ENCODE measurements at regions of chr2 and their contacts with region 1.

Region 1: DNA sequence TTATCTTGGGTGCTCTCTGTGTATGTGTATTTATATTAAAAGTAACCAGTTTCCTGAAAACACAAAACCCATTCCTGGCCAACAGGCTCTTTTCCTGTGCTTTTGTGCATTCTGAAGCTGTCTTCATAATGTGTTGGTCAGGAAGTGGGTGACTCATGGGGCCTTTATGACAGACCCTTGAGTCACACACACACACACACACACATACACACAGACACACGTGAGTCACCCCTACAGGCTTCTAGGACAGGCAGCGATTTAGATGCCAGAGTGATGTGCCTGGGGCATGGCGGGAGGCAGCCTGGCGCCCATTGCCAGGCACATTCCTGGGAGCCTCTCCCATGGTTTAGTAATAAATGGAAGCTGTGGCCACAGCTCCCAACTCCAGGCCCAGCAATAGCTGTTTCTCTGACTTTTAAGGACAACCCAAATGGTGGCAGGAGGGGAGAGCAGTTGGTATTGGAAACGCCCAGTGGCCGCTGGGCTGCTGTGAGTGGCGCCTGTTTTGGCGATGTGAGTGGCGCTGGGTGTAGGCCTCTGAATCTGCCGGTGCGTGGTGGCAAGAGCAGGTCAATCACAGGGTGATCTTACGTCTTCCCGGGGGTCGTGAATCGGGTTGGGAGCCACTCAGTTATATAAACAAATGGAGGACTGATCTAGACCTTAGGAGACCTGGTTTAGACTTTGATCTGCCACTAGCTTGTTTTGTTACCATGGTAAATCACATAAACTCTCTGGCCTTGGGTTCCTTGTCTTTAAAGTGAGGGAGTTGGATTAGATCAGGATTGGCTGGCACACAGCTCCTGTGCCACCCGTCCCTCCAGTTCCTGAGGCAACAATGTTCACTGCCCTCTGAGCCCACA is 150.7 kb upstream of the DLX2 start:
- DNase-seq: peak; percentile 100
- H3K4me3 Mint-ChIP-seq: peak overlapping the region; percentile 56
- H3K27ac Mint-ChIP-seq: peak overlapping the region; percentile 100
- H3K4me1 Mint-ChIP-seq: peaks cover 55% of the 10 kb centered on the region
- H3K27me3 Mint-ChIP-seq: no peaks in the 10 kb centered on the region
- CTCF ChIP-seq: no peak

Region 2: DNA sequence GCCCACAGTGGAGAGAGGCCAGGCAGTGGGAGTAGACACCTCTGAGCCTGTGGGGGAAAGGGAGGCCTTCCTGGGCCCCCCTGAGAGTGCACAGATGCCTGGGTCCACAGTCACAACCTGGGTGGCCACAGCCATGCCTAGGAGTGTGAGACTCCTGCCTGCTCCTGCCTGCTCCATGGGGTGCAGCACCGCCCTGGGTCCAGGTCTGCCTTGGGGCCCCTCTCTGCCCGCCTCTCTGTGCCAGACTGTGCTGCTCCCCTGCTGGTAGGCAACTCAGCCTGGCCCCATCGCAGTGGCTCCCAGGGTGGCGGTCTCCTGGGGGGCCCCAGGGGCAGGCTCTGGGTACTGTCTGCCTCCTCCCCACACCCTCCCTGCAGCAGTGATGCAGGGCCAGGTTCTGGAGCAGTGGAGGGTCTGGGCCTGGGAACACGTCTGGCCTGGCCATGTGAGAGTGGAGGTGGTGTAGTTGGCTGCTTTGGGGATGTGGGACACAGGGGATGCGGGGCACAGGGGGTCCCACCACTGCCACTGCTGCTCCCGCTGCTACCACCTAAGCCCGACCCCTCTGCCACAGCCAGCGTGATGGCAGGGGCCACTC is 90.6 kb before region 1 on chr2:
- CTCF ChIA-PET with region 1: no interaction called
- POLR2A ChIA-PET with region 1: no interaction called
- intact Hi-C with region 1: no loop called
- DNase-seq: no peak
- H3K4me3 Mint-ChIP-seq: no peak overlapping the region
- H3K27ac Mint-ChIP-seq: no peak overlapping the region
- H3K4me1 Mint-ChIP-seq: no peaks in the 10 kb centered on the region
- H3K27me3 Mint-ChIP-seq: peaks cover 2% of the 10 kb centered on the region
- CTCF ChIP-seq: no peak

Region 3: GRCh38 chr2:172179045-172179701 is 74.2 kb before region 1 on chr2:
- CTCF ChIA-PET with region 1: interaction called, 4 read pairs
- POLR2A ChIA-PET with region 1: interaction called, 14 read pairs
- intact Hi-C with region 1: no loop called
- DNase-seq: peak; percentile 89
- H3K4me3 Mint-ChIP-seq: no peak overlapping the region
- H3K27ac Mint-ChIP-seq: peak overlapping the region; percentile 9
- H3K4me1 Mint-ChIP-seq: peaks cover 28% of the 10 kb centered on the region
- H3K27me3 Mint-ChIP-seq: no peaks in the 10 kb centered on the region
- CTCF ChIP-seq: no peak

Region 4: GRCh38 chr2:172208791-172209325 is 44.6 kb before region 1 on chr2:
- CTCF ChIA-PET with region 1: interaction called, 3 read pairs
- POLR2A ChIA-PET with region 1: interaction called, 19 read pairs
- intact Hi-C with region 1: no loop called
- DNase-seq: peak; percentile 56
- H3K4me3 Mint-ChIP-seq: peak overlapping the region; percentile 41
- H3K27ac Mint-ChIP-seq: peak overlapping the region; percentile 91
- H3K4me1 Mint-ChIP-seq: peaks cover 26% of the 10 kb centered on the region
- H3K27me3 Mint-ChIP-seq: no peaks in the 10 kb centered on the region
- CTCF ChIP-seq: no peak

Region 5: GRCh38 chr2:172226244-172227061 is 27.0 kb before region 1 on chr2:
- CTCF ChIA-PET with region 1: interaction called, 33 read pairs
- POLR2A ChIA-PET with region 1: interaction called, 245 read pairs
- intact Hi-C with region 1: no loop called
- DNase-seq: no peak
- H3K4me3 Mint-ChIP-seq: no peak overlapping the region
- H3K27ac Mint-ChIP-seq: no peak overlapping the region
- H3K4me1 Mint-ChIP-seq: peaks cover 55% of the 10 kb centered on the region
- H3K27me3 Mint-ChIP-seq: no peaks in the 10 kb centered on the region
- CTCF ChIP-seq: peak; percentile 23

Region 6: DNA sequence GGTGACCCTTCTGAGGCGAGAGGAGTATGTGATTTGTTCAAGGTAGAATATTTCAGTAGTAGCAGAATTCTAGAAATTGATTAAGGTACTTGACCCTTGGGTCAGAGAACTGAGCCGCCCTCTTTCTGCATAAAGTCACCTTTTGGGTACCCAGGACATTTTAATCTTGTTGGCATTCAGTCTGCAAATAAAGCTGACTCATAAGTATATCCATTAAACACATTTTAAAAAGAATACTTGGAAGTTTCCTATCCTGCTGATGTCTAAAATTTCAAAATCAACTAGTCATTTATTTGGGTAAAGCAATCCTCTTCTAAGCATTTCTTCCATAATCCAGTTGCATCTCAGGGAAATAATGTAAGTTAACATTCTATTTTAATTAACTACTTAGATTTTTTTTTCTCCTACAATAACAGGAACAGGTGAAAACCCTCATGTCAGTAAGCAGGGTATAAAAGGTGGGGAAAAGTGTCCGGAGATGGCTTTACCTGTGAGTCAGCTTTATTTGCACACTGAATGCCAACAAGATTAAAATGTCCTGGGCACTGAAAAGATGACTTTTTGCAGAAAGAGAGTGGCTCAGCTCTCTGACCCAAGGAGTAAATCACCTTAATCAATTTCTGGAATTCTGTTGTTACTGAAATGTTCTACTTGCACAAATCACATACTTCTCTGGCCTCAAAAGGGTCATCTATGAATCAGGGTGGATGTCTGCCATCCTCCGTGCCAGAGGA is 95.3 kb after region 1 on chr2:
- CTCF ChIA-PET with region 1: no interaction called
- POLR2A ChIA-PET with region 1: no interaction called
- intact Hi-C with region 1: no loop called
- DNase-seq: no peak
- H3K4me3 Mint-ChIP-seq: no peak overlapping the region
- H3K27ac Mint-ChIP-seq: no peak overlapping the region
- H3K4me1 Mint-ChIP-seq: no peaks in the 10 kb centered on the region
- H3K27me3 Mint-ChIP-seq: no peaks in the 10 kb centered on the region
- CTCF ChIP-seq: no peak

Region 7: DNA sequence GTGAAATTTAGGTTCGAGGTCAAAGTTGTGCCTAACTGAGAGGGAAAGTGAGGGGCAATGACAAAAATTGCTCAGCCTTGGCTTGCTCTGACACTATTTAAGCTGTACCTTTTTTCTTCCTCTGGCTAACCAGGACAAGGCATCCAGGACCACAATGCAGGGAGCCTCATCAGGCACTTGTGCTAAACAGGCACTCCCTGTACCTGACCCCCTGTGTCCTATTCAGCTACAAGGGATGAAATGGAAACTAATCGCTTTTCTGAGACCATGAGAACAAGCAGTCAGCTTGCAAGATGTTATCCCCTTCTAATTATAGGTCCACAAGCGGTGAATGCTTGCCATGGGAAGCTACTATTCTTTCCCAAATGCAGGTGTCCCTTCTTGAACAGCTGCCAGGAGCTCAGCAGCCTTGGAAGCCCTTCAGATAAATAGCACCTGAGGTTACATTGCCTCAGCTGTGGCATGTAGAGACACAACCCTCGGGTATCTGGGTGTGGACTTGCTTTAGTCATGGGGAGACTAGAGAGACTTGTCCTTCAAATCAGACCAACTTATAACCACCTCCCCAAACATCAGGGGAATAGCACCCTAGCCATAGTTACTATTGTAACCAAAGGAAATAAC is 154.8 kb after region 1 on chr2:
- CTCF ChIA-PET with region 1: no interaction called
- POLR2A ChIA-PET with region 1: interaction called, 10 read pairs
- intact Hi-C with region 1: no loop called
- DNase-seq: peak; percentile 97
- H3K4me3 Mint-ChIP-seq: peak overlapping the region; percentile 22
- H3K27ac Mint-ChIP-seq: peak overlapping the region; percentile 88
- H3K4me1 Mint-ChIP-seq: peaks cover 37% of the 10 kb centered on the region
- H3K27me3 Mint-ChIP-seq: no peaks in the 10 kb centered on the region
- CTCF ChIP-seq: no peak

Region 8: DNA sequence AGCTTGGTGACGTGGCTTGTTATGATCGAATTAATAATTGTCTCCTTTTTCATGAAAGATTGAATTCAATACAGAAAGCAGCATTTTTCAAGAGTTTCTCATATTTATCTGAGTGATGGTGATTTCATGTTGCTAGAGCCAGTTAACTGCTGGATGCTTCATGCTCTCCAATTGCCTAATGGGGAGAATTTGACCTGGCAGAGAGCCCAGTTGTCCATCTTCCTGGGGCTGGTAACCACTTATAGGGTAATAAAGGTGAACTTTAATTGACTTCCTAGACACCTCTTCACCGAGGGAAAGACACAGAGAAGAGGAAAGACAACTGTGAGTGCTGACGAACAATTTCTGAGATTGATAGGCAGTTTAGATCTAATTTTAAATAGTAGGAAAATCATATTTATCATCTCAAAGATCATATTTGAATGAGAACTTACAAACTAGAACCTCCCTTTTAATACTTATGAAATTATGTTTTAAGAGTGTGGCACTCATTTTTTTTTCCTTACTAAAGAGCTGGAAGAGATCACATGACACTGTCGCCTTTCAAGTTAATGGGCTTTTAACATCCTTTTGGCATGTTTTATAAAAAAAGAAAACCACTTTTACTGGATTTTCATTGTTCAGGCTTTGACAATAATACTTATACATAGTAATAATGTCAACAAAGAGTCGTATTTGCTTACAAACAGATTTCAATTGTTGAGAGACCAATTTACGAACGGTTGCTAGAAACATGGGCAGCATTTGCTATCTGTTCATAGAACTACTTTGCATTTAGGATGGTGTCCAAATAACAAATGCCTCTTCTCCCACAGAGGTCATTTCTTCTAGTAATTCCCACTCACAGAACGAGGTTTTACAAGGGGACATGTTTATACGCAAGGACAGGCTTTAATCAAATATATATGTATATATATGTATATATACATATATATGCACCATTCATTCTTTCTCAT is 635.6 kb after region 1 on chr2:
- CTCF ChIA-PET with region 1: no interaction called
- POLR2A ChIA-PET with region 1: no interaction called
- intact Hi-C with region 1: no loop called
- DNase-seq: peak; percentile 24
- H3K4me3 Mint-ChIP-seq: no peak overlapping the region
- H3K27ac Mint-ChIP-seq: no peak overlapping the region
- H3K4me1 Mint-ChIP-seq: no peaks in the 10 kb centered on the region
- H3K27me3 Mint-ChIP-seq: peaks cover 46% of the 10 kb centered on the region
- CTCF ChIP-seq: no peak